ENCODE measurements at regions of chr21 and their contacts with region 1.

Region 1: GRCh38 chr21:25895565-25896205 is 160.9 kb downstream of the GABPA start:
- DNase-seq: no peak
- H3K4me3 ChIP-seq: no peak overlapping the region
- H3K27ac ChIP-seq: peak overlapping the region in 1 of 2 donors; percentile 32
- H3K4me1 ChIP-seq: no peaks in the 10 kb centered on the region
- H3K27me3 ChIP-seq: no peaks in the 10 kb centered on the region
- CTCF ChIP-seq: peak; percentile 42 to 66 (median 52)

Region 2: GRCh38 chr21:25979845-25980616 is 84.3 kb after region 1 on chr21:
- intact Hi-C with region 1: loop called (anchors 5 kb)
- DNase-seq: no peak
- H3K4me3 ChIP-seq: no peak overlapping the region
- H3K27ac ChIP-seq: no peak overlapping the region
- H3K4me1 ChIP-seq: no peaks in the 10 kb centered on the region
- H3K27me3 ChIP-seq: no peaks in the 10 kb centered on the region
- CTCF ChIP-seq: no peak

Measured in ascending aorta (tissue), 2 donors.